Sciatic nerve (tissue), 2 donors: ENCODE measurements at regions of chr5 and their contacts with region 1.

Region 1: GRCh38 chr5:143824851-143825720 is 13.1 kb downstream of the HMHB1 start:
- DNase-seq: peak; percentile 92
- ATAC-seq: peak; percentile 95

Region 2: GRCh38 chr5:142922223-142922952 is 902.7 kb before region 1 on chr5:
- intact Hi-C with region 1: loop called (anchors 10 kb)
- DNase-seq: no peak
- ATAC-seq: peak; percentile 74

Region 3: GRCh38 chr5:143002459-143003328 is 822.4 kb before region 1 on chr5:
- intact Hi-C with region 1: loop called (anchors 10 kb)
- DNase-seq: no peak
- ATAC-seq: peak; percentile 87

Region 4: GRCh38 chr5:143403593-143404415 is 421.3 kb before region 1 on chr5 and contains the start of gene NR3C1:
- intact Hi-C with region 1: loop called (anchors 10 kb)
- DNase-seq: peak; percentile 91
- ATAC-seq: peak; percentile 79
- total RNA-seq, gene NR3C1: 148 TPM